CD4-positive, alpha-beta memory T cell (primary cell): ENCODE measurements at regions of chr11 and their contacts with region 1.

Region 1: GRCh38 chr11:66237867-66238266 is 30.6 kb upstream of the RAB1B start:
- DNase-seq: no peak
- H3K4me3 ChIP-seq: no peak overlapping the region
- H3K4me3 Mint-ChIP-seq: no peak overlapping the region
- H3K27ac ChIP-seq: no peak overlapping the region
- H3K27ac Mint-ChIP-seq: peak overlapping the region in 1 of 7 donors; percentile 24
- H3K4me1 ChIP-seq: no peaks in the 10 kb centered on the region
- H3K4me1 Mint-ChIP-seq: peaks cover 0 to 2% (median 0%) of the 10 kb centered on the region in 4 donors
- H3K27me3 ChIP-seq: no peaks in the 10 kb centered on the region
- H3K27me3 Mint-ChIP-seq: no peaks in the 10 kb centered on the region

Region 2: DNA sequence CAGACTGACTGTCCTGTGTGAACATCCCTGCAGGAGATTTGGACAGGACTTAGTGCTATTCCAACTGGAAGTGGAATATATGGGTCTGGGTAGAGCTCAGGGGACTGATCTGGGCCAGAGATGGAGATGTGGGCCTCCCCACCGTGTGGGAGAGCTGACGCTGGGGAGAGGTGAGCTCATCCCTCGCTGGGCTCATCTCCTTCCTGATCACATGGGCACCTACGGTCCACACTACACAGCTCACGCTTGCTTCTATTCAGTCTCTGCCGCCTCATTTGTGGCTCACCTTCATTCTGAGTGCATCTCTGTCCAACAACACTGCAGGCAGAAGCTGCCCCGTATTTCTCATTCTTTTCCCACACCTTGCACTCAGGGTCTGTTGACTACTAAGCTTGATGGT is 13.9 kb after region 1 on chr11:
- CTCF ChIA-PET with region 1: interaction called, 9 read pairs
- POLR2A ChIA-PET with region 1: interaction called, 12 read pairs
- intact Hi-C with region 1: no loop called
- DNase-seq: no peak
- H3K4me3 ChIP-seq: no peak overlapping the region
- H3K4me3 Mint-ChIP-seq: peak overlapping the region in 1 of 8 donors; percentile 39
- H3K27ac ChIP-seq: no peak overlapping the region
- H3K27ac Mint-ChIP-seq: peak overlapping the region in 4 of 7 donors; percentile 29 to 58 (median 46)
- H3K4me1 ChIP-seq: peaks cover 10% of the 10 kb centered on the region
- H3K4me1 Mint-ChIP-seq: peaks cover 10 to 31% (median 20%) of the 10 kb centered on the region in 4 donors
- H3K27me3 ChIP-seq: no peaks in the 10 kb centered on the region
- H3K27me3 Mint-ChIP-seq: no peaks in the 10 kb centered on the region

Region 3: GRCh38 chr11:66268283-66268951 is 30.6 kb after region 1 on chr11 and contains the start of gene RAB1B:
- CTCF ChIA-PET with region 1: no interaction called
- POLR2A ChIA-PET with region 1: no interaction called
- intact Hi-C with region 1: no loop called
- DNase-seq: peak; percentile 99 to 100 (median 100)
- H3K4me3 ChIP-seq: peak within 1 kb of the TSS; percentile 62 to 84
- H3K4me3 Mint-ChIP-seq: peak within 1 kb of the TSS; percentile 92 to 99 (median 94)
- H3K27ac ChIP-seq: peak within 1 kb of the TSS; percentile 88
- H3K27ac Mint-ChIP-seq: peak within 1 kb of the TSS; percentile 94 to 100 (median 98)
- H3K4me1 ChIP-seq: peaks cover 48% of the 10 kb centered on the region
- H3K4me1 Mint-ChIP-seq: peaks cover 23 to 57% (median 39%) of the 10 kb centered on the region in 4 donors
- H3K27me3 ChIP-seq: no peaks in the 10 kb centered on the region
- H3K27me3 Mint-ChIP-seq: no peaks in the 10 kb centered on the region
- total RNA-seq, gene RAB1B: 76.4 to 79.4 TPM